ENCODE measurements at regions of chr16 and their contacts with region 1.

Region 1: DNA sequence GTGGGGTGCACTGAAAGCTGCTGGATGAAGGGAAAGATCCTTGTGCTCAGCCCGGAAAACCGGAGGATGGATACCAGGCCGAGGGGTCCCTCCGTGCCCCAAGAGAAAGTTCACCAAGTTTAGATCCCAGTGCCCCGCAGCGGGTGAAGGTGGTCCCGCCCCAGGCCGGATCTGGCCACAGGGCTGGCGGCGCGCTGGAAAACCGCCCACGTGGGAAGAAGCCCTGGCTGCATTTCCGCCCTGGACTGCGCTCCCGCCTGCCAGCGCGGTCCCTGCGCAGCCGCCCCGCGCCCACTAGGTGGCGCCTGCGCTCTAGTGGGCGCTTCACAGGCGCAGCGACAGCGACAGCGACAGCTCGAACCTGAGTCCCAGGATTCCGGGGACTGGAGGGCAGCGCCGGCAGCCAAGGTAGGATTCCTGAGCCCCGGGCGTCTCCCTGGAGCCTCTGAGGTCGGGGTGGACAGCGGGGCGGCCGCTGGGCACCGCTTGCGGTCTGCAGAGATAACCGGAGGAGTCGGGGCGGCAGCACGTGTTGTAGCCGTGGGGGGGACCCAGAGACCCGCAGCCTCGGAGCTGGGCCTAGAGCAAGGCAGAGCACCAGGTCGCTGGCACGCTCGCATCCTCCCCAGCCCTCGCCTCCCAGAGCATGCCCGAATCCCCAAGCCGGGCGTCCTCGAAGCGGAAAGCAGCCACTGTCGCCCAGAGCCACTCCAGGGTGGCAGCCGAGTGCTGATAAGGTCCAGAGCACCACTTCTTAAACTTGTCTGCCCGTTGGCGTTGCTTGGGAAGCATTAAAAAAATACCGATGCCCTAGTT is at the start of gene CHD9:
- DNase-seq: peak; percentile 56
- ATAC-seq: peak; percentile 81
- H3K4me3 ChIP-seq: peak within 1 kb of the TSS; percentile 94
- H3K27ac ChIP-seq: peak within 1 kb of the TSS; percentile 74
- H3K4me1 ChIP-seq: peaks cover 22% of the 10 kb centered on the region
- H3K27me3 ChIP-seq: no peaks in the 10 kb centered on the region
- CTCF ChIP-seq: peak; percentile 97 to 99 (median 98)
- EP300 ChIP-seq: 0 out of 4 replicates have a peak, but pooled peaks of 1 of the 2 experiments have one; percentile 23
- POLR2A ChIP-seq: peak; percentile 70
- RAD21 ChIP-seq: peak; percentile 97
- polyA plus RNA-seq, gene CHD9: 70.5 to 95.7 TPM

Region 2: DNA sequence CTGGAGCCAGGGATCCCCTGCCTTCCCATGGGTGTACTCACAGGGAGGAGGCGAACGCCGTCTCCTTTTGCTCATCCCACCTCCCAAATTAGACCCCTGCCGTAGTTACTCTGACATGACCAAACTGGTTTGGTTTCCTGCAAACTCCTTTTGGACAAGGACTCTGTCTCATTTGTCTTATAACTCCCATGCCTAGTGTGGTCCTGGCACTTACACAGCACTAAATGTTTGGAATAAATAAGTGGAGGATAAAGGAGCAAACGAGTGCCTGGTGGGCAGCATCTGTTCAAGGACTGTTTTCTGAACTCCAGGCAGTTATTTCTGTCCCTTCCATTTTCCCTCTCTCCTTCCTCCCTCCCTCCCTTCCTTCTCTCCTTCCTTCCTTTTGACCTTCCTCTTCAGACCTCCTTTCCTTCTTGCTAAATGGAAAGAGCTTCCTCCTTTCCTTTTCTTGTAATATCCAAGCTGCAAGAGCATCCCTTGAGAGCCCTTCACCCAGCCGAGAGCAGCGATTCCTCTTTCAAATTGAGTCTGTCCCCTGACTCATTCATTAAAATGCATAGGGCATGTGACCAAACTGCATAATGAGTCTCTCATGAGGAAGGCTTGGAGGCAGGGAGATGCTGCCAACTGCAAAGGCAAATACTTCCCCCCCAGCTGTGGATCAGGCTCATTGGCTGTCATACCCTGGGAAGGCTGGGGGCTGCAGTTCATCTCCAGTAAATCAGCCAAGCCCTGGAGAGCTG is 36.8 kb after region 1 on chr16:
- CTCF ChIA-PET with region 1: interaction called, 14 read pairs
- POLR2A ChIA-PET with region 1: interaction called, 142 read pairs
- RAD21 ChIA-PET with region 1: interaction called, 107 read pairs
- SMC1A ChIA-PET with region 1: interaction called, 270 read pairs
- in situ Hi-C with region 1: loop called (anchors 5 kb)
- intact Hi-C with region 1: no loop called
- DNase-seq: peak; percentile 72
- ATAC-seq: peak; percentile 76
- H3K4me3 ChIP-seq: peak overlapping the region; percentile 55; the same call in 1 of the 2 replicates
- H3K27ac ChIP-seq: peak overlapping the region; percentile 96
- H3K4me1 ChIP-seq: peaks cover 44% of the 10 kb centered on the region
- H3K27me3 ChIP-seq: no peaks in the 10 kb centered on the region
- CTCF ChIP-seq: no peak
- EP300 ChIP-seq: peak in 1 of 2 experiments; percentile 80; a peak in 2 of 4 replicates
- POLR2A ChIP-seq: no peak
- RAD21 ChIP-seq: 0 out of 2 replicates have a peak, but pooled peaks have one; percentile 13

Region 3: GRCh38 chr16:53123747-53124146 is 68.9 kb after region 1 on chr16:
- CTCF ChIA-PET with region 1: interaction called, 30 read pairs
- POLR2A ChIA-PET with region 1: interaction called, 4 read pairs
- RAD21 ChIA-PET with region 1: interaction called, 32 read pairs
- SMC1A ChIA-PET with region 1: interaction called, 10 read pairs
- in situ Hi-C with region 1: no loop called
- intact Hi-C with region 1: no loop called
- DNase-seq: no peak
- ATAC-seq: no peak
- H3K4me3 ChIP-seq: no peak overlapping the region
- H3K27ac ChIP-seq: no peak overlapping the region
- H3K4me1 ChIP-seq: peaks cover 21% of the 10 kb centered on the region
- H3K27me3 ChIP-seq: no peaks in the 10 kb centered on the region
- CTCF ChIP-seq: no peak
- EP300 ChIP-seq: no peak
- POLR2A ChIP-seq: no peak
- RAD21 ChIP-seq: no peak

Region 4: DNA sequence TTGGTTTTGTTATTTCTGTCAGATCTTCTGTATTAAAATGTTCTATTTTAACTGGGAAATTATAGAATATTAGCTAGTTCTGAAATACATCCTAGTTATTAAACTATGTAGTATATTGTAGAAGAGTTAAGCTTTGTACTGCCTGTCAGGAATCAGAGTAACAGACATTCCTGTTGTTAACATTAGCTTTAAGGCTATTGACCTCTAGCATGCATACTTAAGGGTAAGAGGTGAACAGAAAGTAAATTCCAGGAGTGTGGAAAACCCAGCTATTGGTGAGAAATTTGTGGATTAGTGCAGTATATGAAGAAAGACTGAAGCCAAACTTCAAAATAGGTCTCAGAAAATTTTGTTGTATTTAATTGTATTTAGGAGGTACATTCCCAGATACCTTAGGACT is 111.2 kb after region 1 on chr16:
- CTCF ChIA-PET with region 1: interaction called, 64 read pairs
- POLR2A ChIA-PET with region 1: no interaction called
- RAD21 ChIA-PET with region 1: interaction called, 73 read pairs
- SMC1A ChIA-PET with region 1: interaction called, 88 read pairs
- in situ Hi-C with region 1: no loop called
- intact Hi-C with region 1: no loop called
- DNase-seq: no peak
- ATAC-seq: no peak
- H3K4me3 ChIP-seq: no peak overlapping the region
- H3K27ac ChIP-seq: no peak overlapping the region
- H3K4me1 ChIP-seq: no peaks in the 10 kb centered on the region
- H3K27me3 ChIP-seq: no peaks in the 10 kb centered on the region
- CTCF ChIP-seq: no peak
- EP300 ChIP-seq: no peak
- POLR2A ChIP-seq: no peak
- RAD21 ChIP-seq: no peak

Region 5: GRCh38 chr16:53235851-53236250 is 181.0 kb after region 1 on chr16:
- CTCF ChIA-PET with region 1: interaction called, 11 read pairs
- POLR2A ChIA-PET with region 1: no interaction called
- RAD21 ChIA-PET with region 1: interaction called, 3 read pairs
- SMC1A ChIA-PET with region 1: interaction called, 3 read pairs
- in situ Hi-C with region 1: no loop called
- intact Hi-C with region 1: no loop called
- DNase-seq: no peak
- ATAC-seq: no peak
- H3K4me3 ChIP-seq: no peak overlapping the region
- H3K27ac ChIP-seq: no peak overlapping the region
- H3K4me1 ChIP-seq: no peaks in the 10 kb centered on the region
- H3K27me3 ChIP-seq: no peaks in the 10 kb centered on the region
- CTCF ChIP-seq: no peak
- EP300 ChIP-seq: no peak
- POLR2A ChIP-seq: no peak
- RAD21 ChIP-seq: no peak